ENCODE measurements at regions of chr2 and their contacts with region 1.

Region 1: DNA sequence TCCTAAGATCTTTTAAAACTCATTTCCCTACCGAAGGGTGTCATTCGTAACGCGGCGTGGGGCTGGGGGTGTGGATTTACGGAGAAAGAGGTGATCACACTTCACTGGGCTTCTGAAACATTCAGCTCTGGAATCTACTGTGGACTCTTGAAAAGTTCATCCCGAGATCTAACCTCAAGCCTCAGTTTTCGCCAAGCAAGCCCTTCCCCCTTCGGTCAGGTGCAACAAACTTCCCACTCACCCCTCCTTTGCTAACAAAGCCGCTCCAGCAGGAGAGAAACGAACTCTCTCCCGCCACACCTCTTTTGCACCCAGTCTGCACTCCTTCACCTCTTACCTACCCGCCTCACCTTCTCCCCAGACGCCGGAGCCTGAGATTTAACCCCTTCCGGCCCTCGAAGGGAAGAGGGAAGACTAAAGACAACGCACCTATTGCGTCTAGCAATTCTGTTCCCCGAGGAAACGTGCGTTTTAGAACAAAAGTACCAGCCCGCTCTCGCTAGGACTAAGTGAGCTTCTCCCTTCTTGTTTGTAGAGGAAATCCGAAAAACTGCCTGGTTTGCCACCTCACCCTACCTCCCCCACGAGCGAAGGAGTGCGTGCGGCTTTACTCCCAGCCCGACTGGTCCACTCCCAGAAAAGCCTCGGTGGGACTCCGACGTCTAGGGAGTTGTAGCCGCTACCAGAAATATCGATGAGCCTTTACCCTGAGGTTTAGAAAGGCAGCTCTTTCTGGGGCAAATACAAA is 538 bp upstream of the PEX13 start:
- DNase-seq: peak; percentile 81
- ATAC-seq: peak; percentile 75
- H3K4me3 Mint-ChIP-seq: peak overlapping the region; percentile 98
- H3K27ac Mint-ChIP-seq: peak overlapping the region; percentile 95
- H3K4me1 Mint-ChIP-seq: peaks cover 32% of the 10 kb centered on the region
- H3K27me3 Mint-ChIP-seq: no peaks in the 10 kb centered on the region

Region 2: DNA sequence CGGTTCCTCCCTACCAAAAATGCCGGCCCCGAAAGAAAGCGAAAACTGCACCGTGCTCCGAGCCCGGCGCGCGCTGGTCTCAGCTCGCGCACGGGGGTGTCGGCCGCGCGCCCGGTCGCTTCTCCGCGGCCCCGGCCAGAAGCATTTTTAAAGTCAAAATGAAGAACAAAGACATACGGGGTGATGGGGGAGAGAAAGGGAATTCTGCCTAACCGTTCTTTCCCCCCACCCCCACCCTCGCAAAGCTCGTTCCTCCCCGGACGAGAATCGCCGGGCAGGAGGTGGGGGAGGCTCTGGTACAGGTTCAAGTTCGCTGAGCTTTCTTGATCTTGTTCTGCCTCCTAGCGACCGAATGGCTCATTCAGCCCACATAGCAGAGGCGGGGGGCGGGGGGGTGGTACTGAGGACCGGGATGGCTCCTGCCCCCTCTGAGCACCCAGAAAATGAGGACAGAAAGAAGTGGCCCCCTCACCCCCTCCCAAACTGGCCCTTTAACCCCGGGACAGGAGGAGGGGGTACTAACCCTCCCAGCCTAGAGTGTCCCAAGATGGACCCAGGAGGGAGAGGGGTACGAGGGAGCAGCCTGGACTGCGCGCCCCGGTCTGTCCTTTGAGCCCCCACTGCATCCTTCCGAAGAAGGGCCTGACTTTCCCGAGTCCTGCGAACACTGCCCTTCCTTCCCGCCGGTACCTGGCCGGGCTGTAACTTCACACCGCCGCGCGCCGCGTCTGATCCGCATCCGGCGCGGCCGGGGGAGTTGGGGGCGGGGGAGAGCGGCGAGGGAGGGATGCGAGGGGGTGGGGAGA is 466.6 kb before region 1 on chr2:
- CTCF ChIA-PET with region 1: no interaction called
- POLR2A ChIA-PET with region 1: no interaction called
- intact Hi-C with region 1: loop called in 1 of 2 experiments (anchors 5 kb)
- DNase-seq: peak; percentile 77
- ATAC-seq: peak; percentile 67
- H3K4me3 Mint-ChIP-seq: peak overlapping the region; percentile 81
- H3K27ac Mint-ChIP-seq: peak overlapping the region; percentile 72
- H3K4me1 Mint-ChIP-seq: peaks cover 33% of the 10 kb centered on the region
- H3K27me3 Mint-ChIP-seq: peaks cover 47% of the 10 kb centered on the region

Region 3: DNA sequence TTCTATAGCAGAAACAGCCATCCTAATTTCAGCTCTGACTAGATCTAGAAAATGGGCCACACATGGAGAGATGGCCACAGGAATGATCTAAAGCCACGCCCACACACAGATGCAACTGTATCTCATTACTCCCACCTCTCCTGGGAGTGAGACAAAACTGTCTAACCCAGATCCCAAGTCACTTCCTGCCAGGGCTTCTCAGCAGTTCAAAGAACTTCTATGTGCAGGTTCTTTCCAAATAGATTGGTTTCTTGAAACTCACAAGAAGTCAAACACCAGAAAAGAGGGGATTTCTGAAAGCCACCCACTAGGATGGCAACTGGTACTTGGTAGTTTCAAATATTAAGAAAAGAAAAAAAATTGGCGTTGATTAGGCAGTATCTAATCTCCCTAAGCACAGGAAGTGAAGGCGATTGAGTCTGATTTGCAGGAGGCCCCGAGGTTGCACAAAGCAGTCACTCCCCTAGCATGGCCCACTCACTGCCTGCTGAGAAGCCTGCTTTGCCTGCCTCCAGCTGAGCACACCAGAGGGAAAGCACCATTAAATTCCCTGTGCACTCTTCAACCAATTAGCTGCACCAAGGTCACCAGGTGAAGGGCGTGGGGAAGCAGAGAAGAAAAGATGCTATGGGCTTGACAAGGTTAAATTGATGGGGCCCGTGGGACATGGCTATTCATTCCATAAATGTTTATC is 209.8 kb before region 1 on chr2:
- CTCF ChIA-PET with region 1: no interaction called
- POLR2A ChIA-PET with region 1: no interaction called
- intact Hi-C with region 1: loop called (anchors 1 to 5 kb)
- DNase-seq: peak; percentile 83
- ATAC-seq: peak; percentile 92
- H3K4me3 Mint-ChIP-seq: peak overlapping the region; percentile 41
- H3K27ac Mint-ChIP-seq: peak overlapping the region; percentile 86
- H3K4me1 Mint-ChIP-seq: peaks cover 53% of the 10 kb centered on the region
- H3K27me3 Mint-ChIP-seq: no peaks in the 10 kb centered on the region

Region 4: DNA sequence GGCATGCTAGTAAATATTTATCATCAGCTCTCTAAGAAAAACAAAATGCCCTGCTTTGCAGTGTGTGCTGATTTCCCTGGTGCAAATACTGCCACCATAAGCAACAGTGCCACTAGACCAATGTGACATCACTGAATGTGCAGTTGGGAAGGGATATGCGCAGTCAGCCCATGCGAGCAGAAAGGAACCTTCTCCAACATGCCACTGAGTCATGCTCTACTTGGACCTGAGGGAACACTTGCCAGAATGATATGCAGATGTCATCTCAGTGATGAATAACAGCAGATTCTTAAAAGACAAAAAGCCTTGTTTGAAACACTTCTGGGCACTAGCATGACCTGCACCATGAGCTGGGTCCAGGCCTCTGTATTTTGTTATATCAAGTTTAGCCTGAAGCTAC is 190.9 kb before region 1 on chr2:
- CTCF ChIA-PET with region 1: no interaction called
- POLR2A ChIA-PET with region 1: no interaction called
- intact Hi-C with region 1: no loop called
- DNase-seq: no peak
- ATAC-seq: peak; percentile 50
- H3K4me3 Mint-ChIP-seq: no peak overlapping the region
- H3K27ac Mint-ChIP-seq: no peak overlapping the region
- H3K4me1 Mint-ChIP-seq: peaks cover 32% of the 10 kb centered on the region
- H3K27me3 Mint-ChIP-seq: no peaks in the 10 kb centered on the region

Region 5: GRCh38 chr2:60881047-60881932 is 135.7 kb before region 1 on chr2 and contains the start of gene REL:
- CTCF ChIA-PET with region 1: no interaction called
- POLR2A ChIA-PET with region 1: interaction called, 4 read pairs
- intact Hi-C with region 1: loop called in 1 of 2 experiments (anchors 2 kb)
- DNase-seq: peak; percentile 95
- ATAC-seq: peak; percentile 84
- H3K4me3 Mint-ChIP-seq: peak within 1 kb of the TSS; percentile 91
- H3K27ac Mint-ChIP-seq: peak within 1 kb of the TSS; percentile 98
- H3K4me1 Mint-ChIP-seq: peaks cover 25% of the 10 kb centered on the region
- H3K27me3 Mint-ChIP-seq: no peaks in the 10 kb centered on the region
- total RNA-seq, gene REL: 42.7 to 55.9 TPM

Region 6: DNA sequence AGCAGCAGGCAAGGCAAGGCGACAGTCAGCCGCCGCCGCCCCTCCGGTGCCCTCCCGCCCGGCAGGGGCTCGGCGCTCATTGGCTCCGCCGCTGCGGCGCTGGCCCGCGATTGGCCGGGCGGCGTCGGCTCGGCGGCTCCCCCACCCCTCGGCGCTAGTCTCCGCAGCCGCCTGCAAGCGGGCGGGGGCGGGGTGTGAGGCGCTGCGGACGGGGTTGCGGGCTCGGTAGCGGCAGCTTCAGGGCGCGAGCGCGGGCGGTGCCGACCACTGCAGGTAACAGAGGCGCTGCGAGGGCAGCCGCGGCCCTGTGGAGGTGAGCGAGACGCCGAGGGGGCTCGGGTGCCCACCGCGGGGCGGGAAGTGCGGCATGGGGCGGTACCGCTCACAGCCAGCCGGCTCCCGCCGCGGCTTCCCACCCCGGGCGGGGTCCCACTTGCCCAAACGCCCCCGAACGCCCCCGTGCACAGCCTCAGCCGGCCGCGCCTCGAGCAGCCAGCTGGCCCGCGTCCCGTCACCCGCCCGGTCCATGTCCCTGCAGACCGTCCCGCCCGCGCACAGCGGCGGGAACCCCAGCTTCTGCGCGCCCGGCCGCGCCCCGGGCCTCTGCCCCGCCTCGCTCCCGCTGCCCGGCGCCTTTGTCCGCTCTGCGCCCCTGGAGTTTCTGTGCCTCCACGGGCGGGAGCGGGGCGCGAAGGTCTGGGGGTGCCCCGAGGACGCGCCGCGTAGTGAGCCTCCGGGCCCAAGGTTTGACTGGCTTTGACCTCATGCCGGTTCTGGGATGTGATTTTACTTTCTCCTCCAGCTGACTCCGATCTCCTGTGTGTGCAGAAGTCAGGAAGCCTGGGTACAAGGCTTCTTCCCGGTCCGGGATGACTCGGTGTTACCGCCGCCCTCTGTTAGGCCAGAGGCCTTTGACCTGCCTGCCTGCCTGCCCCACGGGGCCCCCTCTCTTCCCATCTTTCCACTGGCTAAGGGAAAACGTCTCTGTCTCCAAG is 49.0 kb after region 1 on chr2 and contains the start of gene SANBR:
- CTCF ChIA-PET with region 1: no interaction called
- POLR2A ChIA-PET with region 1: no interaction called
- intact Hi-C with region 1: loop called (anchors 1 to 5 kb)
- DNase-seq: peak; percentile 90
- ATAC-seq: peak; percentile 99
- H3K4me3 Mint-ChIP-seq: peak within 1 kb of the TSS; percentile 80
- H3K27ac Mint-ChIP-seq: peak within 1 kb of the TSS; percentile 78
- H3K4me1 Mint-ChIP-seq: peaks cover 12% of the 10 kb centered on the region
- H3K27me3 Mint-ChIP-seq: no peaks in the 10 kb centered on the region
- total RNA-seq, gene SANBR: 2.5 to 3.0 TPM

Region 7: GRCh38 chr2:61470965-61471904 is 454.3 kb after region 1 on chr2 and contains the start of gene USP34:
- CTCF ChIA-PET with region 1: no interaction called
- POLR2A ChIA-PET with region 1: no interaction called
- intact Hi-C with region 1: loop called in 1 of 2 experiments (anchors 1 kb)
- DNase-seq: peak; percentile 97
- ATAC-seq: peak; percentile 91
- H3K4me3 Mint-ChIP-seq: peak within 1 kb of the TSS; percentile 83
- H3K27ac Mint-ChIP-seq: peak within 1 kb of the TSS; percentile 94
- H3K4me1 Mint-ChIP-seq: peaks cover 29% of the 10 kb centered on the region
- H3K27me3 Mint-ChIP-seq: no peaks in the 10 kb centered on the region
- total RNA-seq, gene USP34: 63.7 to 67.6 TPM